Common myeloid progenitor, CD34-positive (primary cell): ENCODE measurements at regions of chr5 and their contacts with region 1.

Region 1: GRCh38 chr5:34929150-34929719 is at the start of gene DNAJC21:
- DNase-seq: peak; percentile 97 to 99 (median 98)
- H3K4me3 ChIP-seq: peak within 1 kb of the TSS; percentile 83 to 99 (median 97)
- H3K27ac ChIP-seq: peak within 1 kb of the TSS; percentile 81 to 90
- H3K4me1 ChIP-seq: peaks cover 8 to 25% (median 16%) of the 10 kb centered on the region in 4 experiments
- H3K27me3 ChIP-seq: no peaks in the 10 kb centered on the region

Region 2: DNA sequence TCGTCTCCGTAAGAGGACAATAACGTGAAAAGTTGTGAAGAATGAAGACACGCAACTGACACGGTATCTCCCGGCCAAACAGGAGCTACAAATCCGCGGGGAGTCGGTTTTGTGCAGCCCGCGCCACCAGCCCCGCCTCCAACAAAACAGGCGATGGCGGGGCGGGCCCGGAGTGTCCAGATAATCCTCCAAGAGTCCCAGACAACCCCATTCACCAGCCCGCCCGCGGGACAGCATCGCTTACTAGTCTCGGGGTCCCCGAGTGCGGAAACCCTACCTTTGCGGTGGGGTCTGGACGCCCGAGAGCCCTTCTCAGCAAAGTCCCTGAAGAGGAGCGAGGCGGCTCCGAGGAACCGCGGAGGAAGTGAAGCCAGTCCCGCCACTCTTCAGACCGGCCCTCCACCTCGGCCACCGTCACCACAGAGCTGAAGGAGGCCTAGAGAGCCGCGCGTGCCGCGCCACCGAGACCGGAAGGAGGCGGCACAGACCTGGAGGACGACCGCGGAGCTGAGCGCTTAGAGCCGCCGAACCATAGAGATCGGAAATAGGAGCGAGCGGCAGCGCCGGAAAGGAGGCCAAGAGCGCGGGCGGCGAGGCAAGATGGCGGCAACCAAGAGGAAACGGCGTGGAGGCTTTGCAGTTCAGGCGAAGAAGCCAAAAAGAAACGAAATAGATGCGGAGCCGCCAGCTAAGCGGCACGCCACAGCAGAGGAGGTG is 13.9 kb before region 1 on chr5 and contains the starts of genes BRIX1 and RAD1:
- CTCF ChIA-PET with region 1: interaction called, 8 read pairs
- POLR2A ChIA-PET with region 1: interaction called, 27 read pairs
- DNase-seq: peak; percentile 98 to 99 (median 99)
- H3K4me3 ChIP-seq: peak within 1 kb of the TSS; percentile 93 to 100 (median 97)
- H3K27ac ChIP-seq: peak within 1 kb of the TSS; percentile 80 to 95
- H3K4me1 ChIP-seq: peaks cover 19 to 36% (median 26%) of the 10 kb centered on the region in 4 experiments
- H3K27me3 ChIP-seq: no peaks in the 10 kb centered on the region